Naive thymus-derived CD8-positive, alpha-beta T cell (primary cell): ENCODE measurements at regions of chr22 and their contacts with region 1.

Region 1: DNA sequence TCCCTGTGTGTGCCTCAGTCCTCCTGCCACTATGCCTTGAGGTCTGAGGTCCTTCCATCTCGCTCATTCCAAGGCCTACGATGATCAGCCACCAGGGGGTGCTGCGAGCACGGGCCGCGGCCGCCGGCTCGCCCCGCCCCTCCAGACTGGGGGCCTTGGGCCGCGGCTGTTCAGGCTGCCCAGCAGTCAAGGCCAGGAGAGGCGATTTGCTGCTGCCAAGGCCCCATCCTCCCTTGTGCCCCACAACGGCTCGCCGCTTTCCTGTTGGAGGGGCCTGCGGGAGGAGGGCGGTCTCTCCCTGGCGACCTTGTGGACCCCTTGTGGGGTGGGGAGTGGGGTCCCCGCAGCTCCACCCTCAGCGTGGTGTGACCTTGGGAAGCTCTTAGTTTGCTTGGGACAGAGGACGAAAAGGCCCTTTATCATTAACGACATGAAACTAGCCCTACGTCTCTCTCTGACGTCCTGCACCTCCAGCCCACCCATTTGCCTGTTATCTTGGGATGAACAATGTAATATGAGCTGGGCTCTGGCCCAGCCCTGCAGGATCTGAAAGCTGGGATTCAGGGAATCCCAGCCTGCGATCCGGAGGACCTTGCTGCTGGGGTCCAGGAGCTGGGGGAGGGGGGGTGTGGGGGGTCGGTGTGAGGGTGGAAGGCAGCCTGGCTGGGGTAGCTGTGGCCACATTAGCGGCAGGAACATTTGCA is 5.3 kb upstream of the GALR3 start:
- DNase-seq: peak; percentile 59 to 83 (median 78)
- ATAC-seq: peak; percentile 81 to 82
- H3K4me3 Mint-ChIP-seq: peak overlapping the region; percentile 20 to 67 (median 54)
- H3K27ac Mint-ChIP-seq: peak overlapping the region in 1 of 10 donors; percentile 66
- H3K4me1 Mint-ChIP-seq: peaks cover 0 to 19% (median 13%) of the 10 kb centered on the region in 4 donors
- H3K27me3 Mint-ChIP-seq: peaks cover 8 to 51% (median 23%) of the 10 kb centered on the region in 5 donors

Region 2: DNA sequence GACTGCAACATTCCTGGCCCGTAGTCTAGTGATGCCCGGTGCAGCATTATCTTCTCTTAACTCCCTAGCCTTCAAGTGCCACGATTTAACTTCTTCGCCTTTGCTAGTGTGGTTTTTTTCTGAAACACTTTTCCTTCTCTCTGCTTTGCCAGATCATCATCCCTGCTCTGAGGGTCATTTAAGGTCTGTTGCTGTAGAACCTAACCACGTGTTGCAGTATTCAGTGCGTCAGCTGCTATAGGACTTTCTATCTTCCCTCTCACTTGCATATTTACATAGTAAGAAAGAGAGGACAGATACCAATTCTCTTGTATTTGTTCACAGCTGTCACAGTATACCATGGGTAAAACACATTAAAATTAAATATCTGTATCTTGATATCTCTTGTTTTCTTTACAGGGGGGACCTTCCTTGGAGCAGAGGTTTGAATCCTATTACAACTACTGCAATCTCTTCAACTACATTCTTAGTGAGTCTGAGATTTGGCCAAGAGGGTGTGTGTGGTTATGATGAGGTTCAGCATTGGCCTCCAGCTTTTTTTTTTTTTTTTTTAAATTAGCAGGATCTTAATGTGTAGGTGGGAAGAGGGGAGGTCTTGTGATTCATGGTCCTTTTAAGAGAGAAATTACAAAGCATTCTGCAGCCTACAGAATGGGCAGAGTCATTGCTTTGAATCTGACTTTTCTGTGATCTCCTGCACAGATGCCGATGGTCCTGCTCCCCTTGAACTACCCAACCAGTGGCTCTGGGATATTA is 44.9 kb after region 1 on chr22:
- POLR2A ChIA-PET with region 1: interaction called, 19 read pairs
- DNase-seq: no peak
- ATAC-seq: no peak
- H3K4me3 Mint-ChIP-seq: no peak overlapping the region
- H3K27ac Mint-ChIP-seq: peak overlapping the region in 2 of 10 donors; percentile 26 to 31
- H3K4me1 Mint-ChIP-seq: peaks cover 4 to 10% (median 8%) of the 10 kb centered on the region in 4 donors
- H3K27me3 Mint-ChIP-seq: no peaks in the 10 kb centered on the region